Caco-2 (cell line): ENCODE measurements at regions of chr6 and their contacts with region 1.

Region 1: GRCh38 chr6:167907837-167908681 is 81.3 kb downstream of the AFDN start:
- DNase-seq: peak in 1 of 2 experiments; percentile 39
- H3K4me3 ChIP-seq: no peak overlapping the region
- H3K4me3 Mint-ChIP-seq: no peak overlapping the region
- H3K27ac Mint-ChIP-seq: no peak overlapping the region
- H3K4me1 ChIP-seq: peaks cover 13% of the 10 kb centered on the region; the same call in 1 of the 2 replicates
- H3K4me1 Mint-ChIP-seq: peaks cover 15% of the 10 kb centered on the region
- H3K27me3 ChIP-seq: no peaks in the 10 kb centered on the region
- H3K27me3 Mint-ChIP-seq: no peaks in the 10 kb centered on the region
- CTCF ChIP-seq: peak; percentile 33 to 41

Region 2: DNA sequence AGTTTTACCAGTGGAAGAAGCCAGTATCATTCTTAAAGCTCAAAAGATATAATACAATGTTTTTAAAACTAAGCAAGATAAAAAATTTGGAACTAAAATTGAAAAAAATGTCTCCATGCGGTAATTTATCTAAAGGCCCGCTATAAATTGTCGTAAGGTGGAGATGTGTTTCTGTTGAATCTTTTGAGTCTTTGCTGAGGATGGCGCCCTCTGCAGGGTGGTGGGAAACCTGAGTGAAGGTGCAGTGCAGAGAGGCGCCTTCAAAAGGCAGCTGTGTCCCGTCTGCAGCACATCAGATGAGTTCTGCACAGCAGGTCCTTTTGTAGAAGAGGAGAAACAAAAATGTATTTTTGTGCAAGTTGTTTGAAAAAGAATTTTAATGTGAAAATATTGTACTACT is 60.0 kb after region 1 on chr6:
- CTCF ChIA-PET with region 1: no interaction called
- POLR2A ChIA-PET with region 1: no interaction called
- intact Hi-C with region 1: loop called (anchors 5 kb)
- DNase-seq: peak in 1 of 2 experiments; percentile 68
- H3K4me3 ChIP-seq: no peak overlapping the region
- H3K4me3 Mint-ChIP-seq: no peak overlapping the region
- H3K27ac Mint-ChIP-seq: peak overlapping the region; percentile 62
- H3K4me1 ChIP-seq: peaks cover 24% of the 10 kb centered on the region
- H3K4me1 Mint-ChIP-seq: peaks cover 34% of the 10 kb centered on the region
- H3K27me3 ChIP-seq: no peaks in the 10 kb centered on the region
- H3K27me3 Mint-ChIP-seq: no peaks in the 10 kb centered on the region
- CTCF ChIP-seq: peak; percentile 38 to 39

Region 3: GRCh38 chr6:168157272-168158007 is 249.4 kb after region 1 on chr6:
- CTCF ChIA-PET with region 1: no interaction called
- POLR2A ChIA-PET with region 1: no interaction called
- intact Hi-C with region 1: no loop called
- DNase-seq: no peak
- H3K4me3 ChIP-seq: no peak overlapping the region
- H3K4me3 Mint-ChIP-seq: no peak overlapping the region
- H3K27ac Mint-ChIP-seq: no peak overlapping the region
- H3K4me1 ChIP-seq: 0 out of 2 replicates have a peak, but pooled peaks cover 4% of the 10 kb centered on the region
- H3K4me1 Mint-ChIP-seq: peaks cover 14% of the 10 kb centered on the region
- H3K27me3 ChIP-seq: no peaks in the 10 kb centered on the region
- H3K27me3 Mint-ChIP-seq: no peaks in the 10 kb centered on the region
- CTCF ChIP-seq: no peak

Region 4: DNA sequence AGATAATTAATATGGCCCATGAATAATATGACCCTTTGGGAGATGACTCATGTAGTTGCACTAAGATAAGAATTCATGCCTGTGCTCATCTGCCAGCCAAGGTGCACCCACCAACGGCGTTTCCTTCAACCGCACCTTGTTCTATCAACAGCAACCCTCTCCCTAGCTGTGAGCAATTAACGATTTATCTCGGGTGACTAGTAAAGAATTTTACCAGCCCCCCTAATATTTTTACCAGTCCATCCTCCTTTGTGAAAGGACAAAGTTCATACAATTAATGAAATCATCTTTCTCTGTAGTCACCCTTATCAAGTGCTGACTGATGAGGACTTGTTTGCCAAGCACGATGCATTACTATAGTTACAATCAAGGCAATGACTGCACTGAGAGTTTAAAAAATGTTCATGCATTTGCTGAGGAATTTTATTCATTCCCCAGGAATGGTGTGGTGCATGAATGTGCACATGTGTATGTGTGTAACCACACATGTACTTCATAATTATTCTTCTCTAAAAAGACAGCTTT is 651.6 kb after region 1 on chr6:
- CTCF ChIA-PET with region 1: no interaction called
- POLR2A ChIA-PET with region 1: no interaction called
- intact Hi-C with region 1: no loop called
- DNase-seq: no peak
- H3K4me3 ChIP-seq: no peak overlapping the region
- H3K4me3 Mint-ChIP-seq: peak overlapping the region; percentile 46
- H3K27ac Mint-ChIP-seq: peak overlapping the region; percentile 77
- H3K4me1 ChIP-seq: peaks cover 8% of the 10 kb centered on the region
- H3K4me1 Mint-ChIP-seq: peaks cover 8% of the 10 kb centered on the region
- H3K27me3 ChIP-seq: no peaks in the 10 kb centered on the region
- H3K27me3 Mint-ChIP-seq: no peaks in the 10 kb centered on the region
- CTCF ChIP-seq: no peak